Endothelial cell of umbilical vein (primary cell): ENCODE measurements at regions of chr1 and their contacts with region 1.

Region 1: DNA sequence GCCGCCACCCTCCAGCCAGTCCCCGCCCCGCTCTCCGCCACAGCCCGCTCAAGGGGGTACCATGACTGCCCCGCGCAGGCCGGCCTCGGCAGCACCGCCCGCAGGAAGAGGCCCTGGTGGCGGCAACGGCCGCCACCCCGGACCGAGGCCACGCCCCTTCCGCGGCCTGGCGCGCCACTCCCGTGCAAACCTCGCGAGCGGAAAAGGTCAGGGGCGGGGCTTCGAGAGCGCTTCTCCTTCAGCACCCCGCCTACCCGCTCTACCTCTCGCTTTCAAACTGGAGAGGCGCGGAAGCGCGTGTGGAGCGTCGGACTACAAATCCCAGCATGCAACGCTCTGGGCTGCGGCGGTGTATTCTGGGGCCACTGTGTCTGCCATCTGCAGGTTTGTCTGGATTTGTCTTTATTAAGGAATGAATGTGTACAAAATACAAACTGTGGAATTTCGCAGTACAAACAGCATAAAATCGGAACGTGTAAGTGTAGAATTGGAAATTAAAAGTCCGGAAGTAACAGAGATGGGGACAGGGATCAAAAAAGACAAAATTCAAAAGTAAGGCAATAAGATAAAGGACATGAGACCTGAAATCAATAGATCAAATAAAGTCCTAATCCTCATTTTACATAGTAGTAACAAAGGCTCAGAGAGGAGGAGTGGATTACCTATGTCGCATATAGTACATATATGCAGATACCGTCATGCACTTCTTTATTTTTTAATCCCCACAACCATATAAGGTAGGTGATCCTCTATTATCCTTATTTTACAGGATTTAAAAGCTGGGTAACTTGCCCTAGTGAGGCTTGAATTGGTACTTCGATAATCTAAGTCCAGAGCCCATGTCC is 464 bp upstream of the ADSS2 start:
- DNase-seq: peak; percentile 99
- H3K4me3 ChIP-seq: peak overlapping the region in 2 of 3 experiments; percentile 66 to 94
- H3K27ac ChIP-seq: peak overlapping the region; percentile 42
- H3K4me1 ChIP-seq: peaks cover 39% of the 10 kb centered on the region
- H3K27me3 ChIP-seq: no peaks in the 10 kb centered on the region
- CTCF ChIP-seq: peak; percentile 55 to 60
- POLR2A ChIP-seq: no peak

Region 2: DNA sequence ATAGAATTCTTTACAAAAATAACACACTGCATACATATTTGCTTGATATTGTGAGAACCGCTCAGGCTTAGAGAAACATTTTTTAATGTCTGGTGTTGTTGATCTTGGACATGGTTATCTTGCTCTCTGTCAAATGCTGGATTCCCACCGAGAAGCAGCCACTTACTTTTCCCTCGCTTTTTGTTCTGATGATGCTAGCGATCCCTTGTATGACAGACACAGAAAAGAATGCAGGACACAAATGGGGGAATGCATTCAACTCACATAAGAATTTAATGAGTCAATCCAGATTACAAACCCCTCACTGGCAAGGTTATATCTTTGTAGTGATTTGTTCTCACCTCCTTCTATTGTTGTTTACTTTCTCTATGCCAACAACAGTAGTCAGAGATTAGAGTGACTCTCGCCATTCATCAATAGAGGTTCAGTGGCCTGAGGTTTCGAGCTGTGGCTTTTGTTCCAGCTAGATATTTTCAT is 525.3 kb before region 1 on chr1:
- CTCF ChIA-PET with region 1: no interaction called
- POLR2A ChIA-PET with region 1: no interaction called
- dilution Hi-C with region 1: no loop called
- intact Hi-C with region 1: loop called (anchors 10 kb)
- DNase-seq: peak; percentile 96
- H3K4me3 ChIP-seq: peak overlapping the region in 1 of 3 experiments; percentile 1
- H3K27ac ChIP-seq: peak overlapping the region; percentile 78
- H3K4me1 ChIP-seq: peaks cover 37% of the 10 kb centered on the region
- H3K27me3 ChIP-seq: no peaks in the 10 kb centered on the region
- CTCF ChIP-seq: no peak
- POLR2A ChIP-seq: peak; percentile 64

Region 3: DNA sequence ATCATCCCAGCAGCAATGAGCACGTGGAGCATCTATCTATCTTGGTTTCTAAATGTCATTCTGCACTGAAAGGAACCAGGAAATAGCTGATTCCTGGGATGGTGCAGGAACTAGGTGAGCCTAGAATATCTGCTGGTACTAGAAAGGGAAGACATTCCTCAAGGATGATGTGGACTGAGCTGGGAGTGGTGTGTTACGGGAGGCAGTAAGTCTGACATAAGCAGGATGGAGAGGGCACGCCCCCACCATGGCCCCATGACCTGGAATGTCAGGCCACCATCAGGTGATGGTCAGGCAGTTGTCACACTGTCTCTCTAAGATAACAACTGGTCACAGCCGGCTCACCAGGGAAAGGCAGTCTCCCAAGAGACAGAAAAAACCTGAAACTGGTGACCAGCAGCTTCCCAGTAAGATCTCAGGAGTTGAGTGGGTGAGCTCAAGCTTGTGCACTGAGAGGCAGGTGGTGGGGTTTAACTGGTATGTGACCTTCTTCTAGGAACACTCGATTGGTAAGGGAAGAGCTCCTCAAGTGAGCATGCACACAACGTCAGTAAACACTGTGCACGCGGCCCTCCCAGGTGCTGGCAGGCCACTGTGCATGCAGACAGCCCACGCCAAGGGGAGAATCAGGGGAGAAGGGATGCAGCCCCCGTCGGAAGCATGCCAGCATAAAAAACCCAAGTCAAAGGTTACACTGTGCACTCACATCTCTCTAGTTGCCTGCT is 149.1 kb before region 1 on chr1:
- CTCF ChIA-PET with region 1: interaction called, 3 read pairs
- POLR2A ChIA-PET with region 1: no interaction called
- dilution Hi-C with region 1: no loop called
- intact Hi-C with region 1: loop called (anchors 1 kb)
- DNase-seq: peak; percentile 53
- H3K4me3 ChIP-seq: no peak overlapping the region
- H3K27ac ChIP-seq: peak overlapping the region; percentile 13
- H3K4me1 ChIP-seq: peaks cover 52% of the 10 kb centered on the region
- H3K27me3 ChIP-seq: no peaks in the 10 kb centered on the region
- CTCF ChIP-seq: no peak
- POLR2A ChIP-seq: no peak

Region 4: DNA sequence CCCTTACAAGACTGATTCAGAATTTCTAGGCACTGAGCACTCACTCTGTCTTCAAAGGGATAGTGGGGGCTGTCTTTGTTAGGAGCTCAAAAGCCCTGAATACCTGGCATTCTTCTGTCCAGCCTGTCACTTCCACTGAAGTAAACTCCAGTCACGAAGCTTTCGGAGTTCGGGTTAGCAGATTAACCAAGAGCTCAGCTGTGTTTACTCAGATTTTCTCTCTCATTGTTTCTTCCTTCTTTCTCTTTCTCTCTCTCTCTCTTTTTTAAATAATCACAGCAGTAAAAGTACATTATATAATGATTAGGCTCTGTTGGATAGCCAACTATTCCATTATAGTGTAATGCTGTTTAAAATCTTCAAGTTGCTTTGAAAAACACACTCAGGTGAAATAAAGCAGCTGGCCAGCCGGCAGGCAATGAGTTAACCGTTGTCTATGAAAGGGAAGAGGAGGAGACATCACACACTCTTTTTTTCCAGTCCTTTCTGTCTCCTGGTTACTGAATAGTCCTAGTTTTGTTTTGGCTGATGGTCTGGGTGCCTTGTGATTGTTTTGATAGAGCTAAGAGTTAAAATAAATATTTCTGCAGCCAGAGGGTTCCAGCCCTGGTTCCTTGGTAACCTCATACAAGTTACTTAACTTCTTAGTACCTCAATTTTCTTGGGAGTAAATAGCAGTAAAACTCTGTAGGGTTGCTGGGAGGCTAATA is 90.3 kb before region 1 on chr1:
- CTCF ChIA-PET with region 1: no interaction called
- POLR2A ChIA-PET with region 1: no interaction called
- dilution Hi-C with region 1: no loop called
- intact Hi-C with region 1: no loop called
- DNase-seq: peak; percentile 74
- H3K4me3 ChIP-seq: no peak overlapping the region
- H3K27ac ChIP-seq: no peak overlapping the region
- H3K4me1 ChIP-seq: peaks cover 7% of the 10 kb centered on the region
- H3K27me3 ChIP-seq: no peaks in the 10 kb centered on the region
- CTCF ChIP-seq: no peak
- POLR2A ChIP-seq: no peak

Region 5: DNA sequence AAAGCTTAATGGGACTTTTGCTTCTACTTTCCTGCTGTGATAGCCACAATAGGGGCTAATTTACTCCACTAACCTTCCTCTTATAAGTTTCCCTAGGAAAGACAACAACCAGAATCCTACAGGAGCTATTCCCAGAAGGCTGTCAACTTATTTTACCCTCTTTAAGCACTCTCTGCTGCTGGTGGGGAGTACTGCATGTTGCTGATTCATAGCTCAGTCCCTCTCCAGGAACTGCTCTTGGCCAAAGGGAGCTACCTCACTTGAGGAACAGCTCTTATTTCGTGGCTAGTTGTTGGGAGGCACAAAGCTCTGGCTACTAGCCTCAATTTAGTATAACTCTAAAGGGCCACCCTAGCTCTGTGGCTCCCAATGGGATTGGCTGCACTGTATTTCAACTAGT is 37.6 kb before region 1 on chr1:
- CTCF ChIA-PET with region 1: interaction called, 15 read pairs
- POLR2A ChIA-PET with region 1: no interaction called
- dilution Hi-C with region 1: no loop called
- intact Hi-C with region 1: no loop called
- DNase-seq: peak; percentile 64
- H3K4me3 ChIP-seq: no peak overlapping the region
- H3K27ac ChIP-seq: no peak overlapping the region
- H3K4me1 ChIP-seq: no peaks in the 10 kb centered on the region
- H3K27me3 ChIP-seq: no peaks in the 10 kb centered on the region
- CTCF ChIP-seq: peak; percentile 17 to 24
- POLR2A ChIP-seq: no peak

Region 6: DNA sequence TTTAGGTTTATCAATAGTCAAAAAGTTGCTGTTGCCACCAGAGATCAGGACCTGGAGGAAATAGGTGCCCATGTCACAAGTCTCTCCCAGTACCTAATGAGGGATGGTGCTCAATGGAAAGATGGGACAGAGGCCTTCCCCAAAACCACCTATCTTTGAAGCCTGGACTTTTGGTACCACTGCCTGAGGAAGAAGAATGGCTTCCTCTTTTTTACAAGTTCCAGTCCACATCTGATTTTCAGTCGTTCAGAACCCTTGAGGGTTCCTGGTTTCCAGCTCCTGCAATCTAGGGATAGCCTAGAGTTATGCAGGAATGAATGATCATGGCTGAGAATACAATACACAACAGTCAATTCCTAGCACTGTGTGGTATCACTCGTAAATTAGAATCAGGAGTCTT is 14.6 kb after region 1 on chr1:
- CTCF ChIA-PET with region 1: no interaction called
- POLR2A ChIA-PET with region 1: no interaction called
- dilution Hi-C with region 1: no loop called
- intact Hi-C with region 1: no loop called
- DNase-seq: no peak
- H3K4me3 ChIP-seq: no peak overlapping the region
- H3K27ac ChIP-seq: no peak overlapping the region
- H3K4me1 ChIP-seq: no peaks in the 10 kb centered on the region
- H3K27me3 ChIP-seq: no peaks in the 10 kb centered on the region
- CTCF ChIP-seq: no peak
- POLR2A ChIP-seq: no peak

Region 7: GRCh38 chr1:244796718-244797406 is 344.7 kb after region 1 on chr1:
- CTCF ChIA-PET with region 1: no interaction called
- POLR2A ChIA-PET with region 1: no interaction called
- dilution Hi-C with region 1: no loop called
- intact Hi-C with region 1: loop called (anchors 5 kb)
- DNase-seq: peak; percentile 70
- H3K4me3 ChIP-seq: no peak overlapping the region
- H3K27ac ChIP-seq: no peak overlapping the region
- H3K4me1 ChIP-seq: no peaks in the 10 kb centered on the region
- H3K27me3 ChIP-seq: no peaks in the 10 kb centered on the region
- CTCF ChIP-seq: peak; percentile 63 to 69
- POLR2A ChIP-seq: no peak

Region 8: DNA sequence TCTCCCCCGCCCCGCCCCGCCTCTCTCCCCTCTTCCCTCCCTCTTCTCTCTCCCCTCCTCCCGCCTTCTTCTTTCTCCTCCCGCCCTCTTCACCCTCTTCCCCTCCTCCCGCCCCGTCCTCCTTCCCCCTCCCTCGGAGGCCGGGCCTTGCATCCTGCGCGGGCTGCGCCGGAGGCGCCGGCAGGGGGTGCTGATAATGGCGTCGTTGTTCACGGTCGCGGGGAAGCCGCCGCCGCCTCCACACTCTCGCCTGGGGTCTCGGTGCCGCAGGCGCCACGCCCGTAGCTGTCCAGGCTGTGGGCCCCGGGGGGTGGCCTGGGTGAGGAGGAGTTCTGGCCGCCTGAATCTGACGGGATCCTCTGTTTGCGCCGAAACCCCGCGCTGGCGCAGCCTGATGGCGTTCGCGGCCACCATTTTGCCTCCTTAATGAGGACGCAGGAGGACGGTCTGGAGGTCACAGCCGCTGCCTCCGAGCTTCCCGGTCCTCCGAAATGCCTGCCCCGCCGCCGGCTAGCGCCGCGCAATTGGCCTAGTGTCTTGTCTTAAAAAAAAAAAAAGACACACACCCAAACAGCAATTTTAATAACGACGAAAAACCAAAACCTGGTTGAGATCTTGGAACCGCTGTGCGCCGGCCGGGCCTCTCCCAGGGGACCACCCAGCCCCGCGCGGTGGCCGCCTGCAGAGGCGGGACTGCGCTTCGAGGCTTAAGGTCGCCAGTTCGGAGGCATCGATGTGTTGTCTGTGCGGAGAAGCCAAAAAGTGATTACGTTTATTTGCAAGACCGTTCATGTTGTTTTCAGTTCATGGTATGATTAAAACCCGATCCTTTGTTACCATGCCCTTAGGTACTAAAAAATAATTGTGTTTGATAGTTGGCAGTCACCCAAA is 518.7 kb after region 1 on chr1:
- CTCF ChIA-PET with region 1: no interaction called
- POLR2A ChIA-PET with region 1: no interaction called
- dilution Hi-C with region 1: no loop called
- intact Hi-C with region 1: loop called (anchors 2 kb)
- DNase-seq: peak; percentile 94
- H3K4me3 ChIP-seq: peak overlapping the region; percentile 37 to 86 (median 80)
- H3K27ac ChIP-seq: peak overlapping the region; percentile 96
- H3K4me1 ChIP-seq: peaks cover 15% of the 10 kb centered on the region
- H3K27me3 ChIP-seq: no peaks in the 10 kb centered on the region
- CTCF ChIP-seq: peak; percentile 47 to 77
- POLR2A ChIP-seq: peak; percentile 86